Calu3 (cell line): ENCODE measurements at regions of chr3 and their contacts with region 1.

Region 1: GRCh38 chr3:172710664-172711453 is at the start of gene NCEH1:
- DNase-seq: peak; percentile 97
- H3K4me3 Mint-ChIP-seq: peak within 1 kb of the TSS; percentile 96
- H3K27ac Mint-ChIP-seq: peak within 1 kb of the TSS; percentile 98
- H3K4me1 Mint-ChIP-seq: peaks cover 44% of the 10 kb centered on the region
- H3K27me3 Mint-ChIP-seq: no peaks in the 10 kb centered on the region
- CTCF ChIP-seq: peak; percentile 97
- total RNA-seq, gene NCEH1: 159 and 163 TPM in 2 replicates

Region 2: DNA sequence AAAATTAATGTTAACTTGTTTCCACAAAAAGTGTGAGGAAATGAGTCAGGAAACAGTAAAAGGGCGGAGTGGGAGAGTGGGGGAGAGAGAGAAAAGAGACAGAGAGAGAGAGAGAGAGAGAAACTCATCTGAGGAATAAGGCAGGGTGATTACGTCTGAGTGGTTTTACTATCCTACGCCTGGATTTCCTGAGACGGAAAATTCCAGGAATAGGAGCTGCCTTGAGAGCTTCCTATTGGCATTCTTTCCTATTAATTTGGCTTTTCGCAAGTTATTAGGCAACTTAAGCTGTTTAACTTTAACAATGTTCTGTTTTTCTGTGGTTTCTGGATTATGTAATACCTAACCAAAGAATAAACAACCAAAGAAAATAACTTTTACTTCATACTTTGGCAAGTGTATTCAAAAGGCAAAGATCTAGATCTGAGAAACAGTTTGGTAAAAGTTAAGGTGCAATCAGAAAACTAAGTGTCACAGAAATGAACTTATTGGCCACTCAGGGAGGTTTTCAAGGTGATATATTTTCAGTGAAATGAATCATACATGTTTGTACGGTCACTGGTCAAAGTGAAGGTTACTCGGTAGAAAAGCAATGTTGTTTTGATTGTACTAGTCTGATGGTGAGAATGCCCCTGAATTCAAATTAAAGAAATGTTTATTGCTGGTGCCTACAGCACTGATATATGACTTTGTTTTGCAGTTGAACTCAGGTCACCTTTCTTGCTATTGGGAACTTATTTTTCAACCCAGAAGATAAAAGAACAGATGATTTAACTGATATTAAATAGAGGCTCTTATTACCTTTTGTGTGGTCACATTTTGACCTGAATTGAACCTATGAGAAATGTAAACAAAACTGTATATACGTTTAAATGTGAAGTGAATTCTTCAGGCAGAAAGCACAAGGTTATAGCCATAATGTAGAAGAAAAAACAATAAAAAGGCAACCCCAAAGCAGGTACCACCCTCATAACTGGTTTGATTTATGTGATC is 147.7 kb before region 1 on chr3:
- CTCF ChIA-PET with region 1: interaction called, 3 read pairs
- intact Hi-C with region 1: loop called (anchors 5 kb)
- DNase-seq: peak; percentile 42
- H3K4me3 Mint-ChIP-seq: peak overlapping the region; percentile 27
- H3K27ac Mint-ChIP-seq: peak overlapping the region; percentile 69
- H3K4me1 Mint-ChIP-seq: peaks cover 44% of the 10 kb centered on the region
- H3K27me3 Mint-ChIP-seq: no peaks in the 10 kb centered on the region
- CTCF ChIP-seq: no peak

Region 3: DNA sequence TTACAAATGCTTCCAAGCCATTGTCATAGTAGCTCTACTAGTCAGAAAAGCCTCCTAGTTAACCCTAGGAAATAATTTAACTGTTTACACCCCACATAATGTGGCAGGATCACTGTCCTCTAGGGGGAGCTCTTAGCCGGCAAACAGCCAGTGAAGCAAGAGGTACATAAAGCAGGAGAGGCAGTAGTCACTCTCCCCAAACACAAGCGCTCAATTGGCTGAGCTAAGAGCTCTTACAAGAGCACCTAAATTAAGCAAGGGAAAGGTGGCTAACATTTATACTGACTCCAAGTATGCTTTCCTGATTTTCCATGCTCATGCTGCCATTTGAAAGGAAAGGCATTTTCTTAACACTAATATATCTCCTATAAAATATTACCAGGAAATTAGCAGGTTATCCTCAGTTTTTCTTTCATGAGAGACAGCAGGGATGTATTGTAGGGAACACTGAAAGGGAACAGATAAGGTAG is 37.6 kb before region 1 on chr3:
- CTCF ChIA-PET with region 1: interaction called, 27 read pairs
- intact Hi-C with region 1: loop called (anchors 1 kb)
- DNase-seq: peak; percentile 93
- H3K4me3 Mint-ChIP-seq: no peak overlapping the region
- H3K27ac Mint-ChIP-seq: peak overlapping the region; percentile 41
- H3K4me1 Mint-ChIP-seq: peaks cover 34% of the 10 kb centered on the region
- H3K27me3 Mint-ChIP-seq: no peaks in the 10 kb centered on the region
- CTCF ChIP-seq: peak; percentile 99

Region 4: GRCh38 chr3:172692751-172693338 is 18.0 kb before region 1 on chr3:
- CTCF ChIA-PET with region 1: interaction called, 5 read pairs
- intact Hi-C with region 1: loop called (anchors 1 kb)
- DNase-seq: no peak
- H3K4me3 Mint-ChIP-seq: no peak overlapping the region
- H3K27ac Mint-ChIP-seq: peak overlapping the region; percentile 34
- H3K4me1 Mint-ChIP-seq: peaks cover 61% of the 10 kb centered on the region
- H3K27me3 Mint-ChIP-seq: no peaks in the 10 kb centered on the region
- CTCF ChIP-seq: no peak

Region 5: DNA sequence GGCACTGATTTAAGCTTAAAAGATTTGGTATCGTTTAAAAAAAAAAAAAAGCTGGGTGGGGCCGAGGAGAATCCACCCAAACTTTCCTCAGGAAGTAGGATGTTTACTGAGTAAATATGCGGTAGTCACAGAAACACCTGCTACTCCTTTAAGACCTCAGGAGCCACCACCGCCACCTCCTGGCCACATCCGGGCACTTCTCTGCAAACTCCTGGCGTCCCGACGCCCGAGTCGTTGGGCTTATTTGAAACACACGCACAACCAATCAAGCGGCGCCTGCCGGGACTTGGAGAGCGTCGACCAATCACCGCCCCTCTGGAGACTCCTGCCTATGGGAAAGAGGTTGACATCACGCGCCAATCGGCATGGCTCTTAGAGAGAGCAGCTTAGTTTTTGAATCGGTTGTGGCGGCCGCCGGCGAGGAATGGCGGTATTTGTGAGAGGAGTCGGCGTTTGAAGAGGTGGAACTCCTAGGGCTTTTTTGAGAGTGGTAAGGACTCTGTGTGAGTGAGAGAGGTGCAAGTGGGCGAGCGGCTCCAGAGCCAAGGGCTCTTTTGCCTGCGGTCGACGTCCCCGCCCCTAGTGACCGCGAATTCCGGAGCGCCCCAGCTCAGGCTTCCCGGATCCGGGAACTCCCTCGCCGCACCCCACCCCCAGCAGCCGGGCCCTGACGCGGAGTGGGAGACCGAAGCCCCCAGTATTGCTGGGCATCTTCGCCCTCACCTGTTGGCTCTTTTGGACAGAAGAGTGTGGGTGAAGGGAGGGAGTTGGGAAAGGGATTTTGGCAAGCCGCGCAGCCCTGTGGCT is 39.7 kb after region 1 on chr3 and contains the start of gene ECT2:
- CTCF ChIA-PET with region 1: interaction called, 59 read pairs
- intact Hi-C with region 1: loop called (anchors 1 kb)
- DNase-seq: peak; percentile 100
- H3K4me3 Mint-ChIP-seq: peak within 1 kb of the TSS; percentile 85
- H3K27ac Mint-ChIP-seq: peak within 1 kb of the TSS; percentile 97
- H3K4me1 Mint-ChIP-seq: peaks cover 65% of the 10 kb centered on the region
- H3K27me3 Mint-ChIP-seq: no peaks in the 10 kb centered on the region
- CTCF ChIP-seq: peak; percentile 89
- total RNA-seq, gene ECT2: 170 and 201 TPM in 2 replicates